ENCODE measurements at regions of chr11 and their contacts with region 1.

Region 1: DNA sequence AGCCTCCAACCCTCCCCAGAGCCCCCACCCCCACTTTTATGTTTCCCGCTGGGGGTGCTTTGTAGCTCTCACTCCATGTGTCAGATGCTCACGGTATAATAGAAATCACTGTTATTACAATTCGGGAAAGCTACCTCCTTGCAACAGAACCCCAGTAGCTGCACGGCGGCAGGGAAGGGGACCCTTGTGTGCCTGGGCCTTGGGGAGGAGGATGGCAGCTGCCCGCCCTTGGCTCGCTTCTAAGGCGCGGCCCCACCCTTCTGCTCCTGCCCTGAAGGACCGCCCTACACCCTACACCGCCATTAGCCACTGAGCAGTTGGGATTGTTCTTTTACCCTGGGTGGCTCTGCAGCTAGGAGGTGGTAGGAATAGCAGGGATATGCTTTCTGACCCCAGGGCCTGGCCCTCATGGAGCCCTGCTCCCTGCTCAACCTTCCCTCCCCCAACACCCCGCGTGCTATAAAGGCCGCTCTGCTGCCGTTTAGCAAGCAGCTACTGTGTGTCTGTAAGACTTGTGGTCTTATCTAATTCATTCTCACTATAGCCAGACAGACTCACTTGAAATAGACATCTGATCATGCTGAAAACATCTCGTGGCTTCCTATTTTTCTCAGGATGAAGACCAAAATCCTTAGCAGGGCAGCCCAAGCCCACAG is 219.7 kb downstream of the CEP164 start:
- DNase-seq: peak; percentile 65

Region 2: DNA sequence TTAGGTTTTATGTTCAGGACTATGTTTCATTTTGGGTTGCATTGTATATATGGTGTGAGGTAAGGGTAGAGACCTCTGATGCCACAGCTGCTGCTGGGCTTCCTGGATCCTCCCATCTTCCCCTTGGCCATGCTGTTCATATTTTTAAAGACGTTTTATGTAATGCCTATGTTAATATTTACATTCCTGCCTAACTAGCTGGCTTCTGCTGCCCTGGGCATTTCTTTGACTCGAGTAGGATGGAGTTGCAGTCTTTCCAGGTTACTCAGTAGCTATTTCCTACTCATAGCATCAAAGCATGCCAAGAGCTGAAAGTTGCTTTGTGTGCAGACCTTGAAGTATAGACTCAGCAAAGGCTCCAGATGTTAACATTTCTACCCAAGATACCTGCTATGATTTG is 1822.7 kb before region 1 on chr11:
- intact Hi-C with region 1: no loop called
- DNase-seq: no peak

Region 3: DNA sequence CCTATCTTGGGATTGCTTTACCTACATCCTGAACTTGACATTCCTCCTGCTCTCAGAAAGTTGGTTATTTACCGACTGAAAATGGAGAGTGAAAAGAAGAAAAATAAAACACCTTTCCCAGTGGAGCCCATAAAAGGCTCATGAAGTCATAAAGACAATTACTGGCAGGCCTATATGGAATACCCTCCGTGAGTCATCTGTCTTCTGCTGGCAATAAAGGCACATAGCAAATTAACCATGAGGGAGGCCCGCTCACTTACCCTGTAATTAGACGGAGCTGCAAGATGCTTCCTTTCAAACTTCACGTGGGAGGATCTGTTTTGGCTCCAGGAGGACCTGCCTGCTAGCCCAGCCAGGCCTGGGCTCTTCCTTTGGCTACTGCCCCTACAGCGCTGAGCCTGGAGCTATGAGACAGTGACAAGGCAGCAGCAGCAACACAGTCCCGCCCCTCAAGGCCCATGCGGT is 1314.9 kb before region 1 on chr11:
- intact Hi-C with region 1: no loop called
- DNase-seq: peak; percentile 69

Region 4: GRCh38 chr11:118076754-118077281 is 529.5 kb after region 1 on chr11 and contains the start of gene TMPRSS4:
- intact Hi-C with region 1: loop called in 1 of 2 experiments (anchors 10 kb)
- DNase-seq: no peak
- total RNA-seq, gene TMPRSS4: not detected

Measured in posterior vena cava (tissue), 2 donors.